ENCODE measurements at regions of chr10 and their contacts with region 1.

Region 1: GRCh38 chr10:92290837-92291615 is at the starts of genes CPEB3 and MARCHF5:
- DNase-seq: peak; percentile 94 to 96
- ATAC-seq: peak; percentile 91 to 94
- H3K4me3 ChIP-seq: peak within 1 kb of the TSS; percentile 67 to 93 (median 88)
- H3K27ac ChIP-seq: peak within 1 kb of the TSS; percentile 89 to 98 (median 93)
- H3K4me1 ChIP-seq: peaks cover 11 to 18% of the 10 kb centered on the region in 2 donors
- H3K27me3 ChIP-seq: no peaks in the 10 kb centered on the region
- CTCF ChIP-seq: peak; percentile 78 to 86 (median 83)
- POLR2A ChIP-seq: peak; percentile 79 to 87
- total RNA-seq, gene CPEB3: 14.5 to 22.5 (median 18.0) TPM
- total RNA-seq, gene MARCHF5: 13.0 to 24.4 (median 15.4) TPM

Region 2: GRCh38 chr10:91797874-91798648 is 493.0 kb before region 1 on chr10 and contains the start of gene TNKS2:
- in situ Hi-C with region 1: no loop called
- intact Hi-C with region 1: loop called (anchors 5 kb)
- DNase-seq: peak; percentile 85 to 93
- ATAC-seq: peak; percentile 67 to 77
- H3K4me3 ChIP-seq: peak within 1 kb of the TSS; percentile 72 to 93 (median 84)
- H3K27ac ChIP-seq: peak within 1 kb of the TSS; percentile 95 to 97 (median 96)
- H3K4me1 ChIP-seq: peaks cover 41 to 50% of the 10 kb centered on the region in 2 donors
- H3K27me3 ChIP-seq: no peaks in the 10 kb centered on the region
- CTCF ChIP-seq: peak in 1 of 5 experiments; percentile 13
- POLR2A ChIP-seq: peak; percentile 95 to 96
- total RNA-seq, gene TNKS2: 26.2 to 40.3 (median 29.5) TPM

Region 3: GRCh38 chr10:92087750-92088395 is 203.2 kb before region 1 on chr10:
- in situ Hi-C with region 1: loop called in 3 of 4 experiments (anchors 10 to 25 kb)
- intact Hi-C with region 1: loop called (anchors 1 kb)
- DNase-seq: peak; percentile 52 to 75
- ATAC-seq: peak; percentile 95 to 98
- H3K4me3 ChIP-seq: no peak overlapping the region
- H3K27ac ChIP-seq: peak overlapping the region; percentile 23 to 58 (median 38)
- H3K4me1 ChIP-seq: peaks cover 24 to 27% of the 10 kb centered on the region in 2 donors
- H3K27me3 ChIP-seq: no peaks in the 10 kb centered on the region
- CTCF ChIP-seq: peak; percentile 77 to 95 (median 81)
- POLR2A ChIP-seq: no peak

Region 4: DNA sequence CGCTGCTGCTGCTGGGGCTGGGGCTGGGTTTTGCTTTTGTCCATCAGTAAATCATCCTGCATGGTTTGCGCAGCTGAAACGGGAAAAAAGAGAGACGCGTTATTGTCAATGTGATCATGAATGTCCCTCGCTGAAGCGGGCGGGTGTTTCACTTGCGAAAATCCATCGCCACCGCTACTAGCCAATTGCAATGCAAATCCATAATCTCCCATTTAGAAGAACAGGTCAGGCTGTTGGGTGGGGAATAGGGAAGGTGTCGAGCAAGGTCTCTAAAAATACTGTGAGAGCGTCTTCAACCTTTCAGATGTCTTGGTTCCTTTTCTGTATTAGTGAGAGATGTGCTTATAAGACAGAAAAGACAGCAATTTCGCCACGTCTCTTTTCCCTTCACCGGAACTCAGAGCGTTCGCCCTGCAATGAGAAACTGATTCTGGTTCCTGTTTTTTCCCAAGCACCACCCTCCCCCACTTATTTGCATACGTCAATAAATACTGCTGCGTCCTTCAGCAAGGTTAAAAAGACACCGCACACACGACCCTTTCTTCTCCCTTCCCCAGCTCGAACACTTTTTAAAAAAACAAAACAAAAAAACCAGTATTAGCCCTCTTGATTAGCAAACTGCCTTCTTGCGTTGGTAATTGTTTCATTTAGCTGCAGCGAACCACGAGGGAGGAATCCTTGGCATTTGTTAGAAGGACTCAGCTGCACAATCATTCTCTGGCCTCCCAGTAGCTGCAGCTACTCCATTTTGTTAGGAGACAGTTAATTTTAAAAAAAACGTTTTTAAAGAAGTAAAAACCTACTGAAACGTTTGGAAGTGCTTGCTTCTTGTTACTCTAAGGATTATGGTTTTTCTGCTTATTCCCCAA is 50.5 kb before region 1 on chr10:
- in situ Hi-C with region 1: no loop called
- intact Hi-C with region 1: loop called (anchors 1 kb)
- DNase-seq: peak; percentile 70 to 77
- ATAC-seq: peak; percentile 68 to 75
- H3K4me3 ChIP-seq: peak overlapping the region; percentile 76 to 80 (median 78)
- H3K27ac ChIP-seq: peak overlapping the region; percentile 89 to 95 (median 94)
- H3K4me1 ChIP-seq: peaks cover 54 to 62% of the 10 kb centered on the region in 2 donors
- H3K27me3 ChIP-seq: no peaks in the 10 kb centered on the region
- CTCF ChIP-seq: no peak
- POLR2A ChIP-seq: peak; percentile 53 to 84

Region 5: GRCh38 chr10:92419740-92420545 is 128.9 kb after region 1 on chr10:
- in situ Hi-C with region 1: no loop called
- intact Hi-C with region 1: no loop called
- DNase-seq: peak in 1 of 2 donors; percentile 27
- ATAC-seq: peak; percentile 39 to 51
- H3K4me3 ChIP-seq: peak overlapping the region; percentile 45 to 69 (median 50)
- H3K27ac ChIP-seq: no peak overlapping the region
- H3K4me1 ChIP-seq: peaks cover 0 to 9% of the 10 kb centered on the region in 2 donors
- H3K27me3 ChIP-seq: peaks cover 18 to 28% (median 23%) of the 10 kb centered on the region in 3 donors
- CTCF ChIP-seq: peak in 2 of 5 experiments; percentile 39 to 46
- POLR2A ChIP-seq: no peak

Region 6: DNA sequence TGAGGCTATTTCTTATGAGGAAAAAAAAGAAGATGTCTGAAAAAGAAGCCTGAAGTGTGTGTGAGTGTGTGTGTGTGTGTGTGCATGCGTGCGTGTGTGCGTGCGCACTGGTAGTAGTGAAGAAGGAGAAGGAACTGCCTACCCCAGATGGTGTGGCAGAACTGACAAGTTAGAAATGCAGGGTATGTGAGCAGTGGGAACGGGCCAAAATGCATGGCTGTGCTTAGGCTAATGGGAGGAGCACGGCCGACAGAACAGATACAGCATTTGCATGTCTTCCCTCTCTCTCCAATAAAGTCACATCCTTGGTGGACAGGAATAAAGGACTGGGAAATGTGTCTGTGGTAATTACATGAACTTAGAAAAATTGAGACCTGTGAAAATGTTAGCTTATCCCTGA is 188.5 kb after region 1 on chr10:
- in situ Hi-C with region 1: no loop called
- intact Hi-C with region 1: no loop called
- DNase-seq: no peak
- ATAC-seq: no peak
- H3K4me3 ChIP-seq: no peak overlapping the region
- H3K27ac ChIP-seq: no peak overlapping the region
- H3K4me1 ChIP-seq: peaks cover 3 to 4% of the 10 kb centered on the region in 2 donors
- H3K27me3 ChIP-seq: no peaks in the 10 kb centered on the region
- CTCF ChIP-seq: no peak
- POLR2A ChIP-seq: no peak

Region 7: DNA sequence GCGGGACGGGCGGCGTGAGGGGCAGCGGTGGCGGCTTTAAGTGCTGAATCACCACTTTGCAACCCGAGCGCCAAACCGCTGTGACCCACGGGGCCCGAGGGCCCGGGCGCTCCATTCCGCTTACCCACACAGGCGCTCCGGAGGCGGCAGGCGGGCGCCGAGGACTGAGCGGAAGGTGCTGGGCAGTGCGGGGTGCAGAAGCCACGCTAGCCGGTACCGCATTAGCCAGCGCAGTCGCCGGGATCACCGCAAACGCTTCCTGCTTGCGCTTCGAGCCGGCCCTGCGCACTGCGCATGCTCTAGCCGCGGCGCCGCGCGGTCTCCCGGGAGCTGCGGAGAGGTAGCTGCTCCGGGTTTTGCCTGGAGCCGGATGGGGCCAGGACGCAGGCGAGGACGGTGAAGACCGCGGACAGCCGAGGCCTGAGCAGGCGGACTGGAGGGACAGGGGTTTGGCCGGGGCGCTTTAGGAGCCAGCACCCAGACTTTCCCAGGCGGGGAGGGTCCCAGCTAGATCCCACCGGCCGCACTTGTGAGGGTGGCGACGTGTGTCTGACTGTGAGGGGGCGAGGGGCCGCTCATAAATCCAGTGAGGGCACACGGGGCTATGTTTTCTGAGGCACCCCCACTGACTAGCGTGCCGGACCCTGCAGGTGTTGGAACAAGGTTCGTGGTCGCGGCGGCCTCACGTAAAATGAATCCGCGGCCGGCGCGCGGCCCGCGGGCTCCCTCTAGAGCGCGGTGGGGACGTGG is 282.9 kb after region 1 on chr10 and contains the start of gene IDE:
- in situ Hi-C with region 1: no loop called
- intact Hi-C with region 1: loop called (anchors 2 kb)
- DNase-seq: peak; percentile 65 to 84
- ATAC-seq: peak; percentile 92
- H3K4me3 ChIP-seq: peak within 1 kb of the TSS; percentile 81 to 100 (median 95)
- H3K27ac ChIP-seq: peak within 1 kb of the TSS; percentile 94 to 98 (median 95)
- H3K4me1 ChIP-seq: peaks cover 22 to 30% of the 10 kb centered on the region in 2 donors
- H3K27me3 ChIP-seq: no peaks in the 10 kb centered on the region
- CTCF ChIP-seq: peak; percentile 69 to 94 (median 84)
- POLR2A ChIP-seq: peak; percentile 43 to 55
- total RNA-seq, gene IDE: 41.2 to 71.0 (median 52.9) TPM